Posterior cingulate gyrus (tissue), 11 donors: ENCODE measurements at regions of chr15 and their contacts with region 1.

Region 1: GRCh38 chr15:57561041-57561711 is 30.5 kb upstream of the MYZAP start:
- DNase-seq: peak in 7 of 10 donors; percentile 33 to 94 (median 68)

Region 2: GRCh38 chr15:57635300-57635909 is 74.2 kb after region 1 on chr15:
- intact Hi-C with region 1: loop called (anchors 5 kb)
- DNase-seq: no peak

Region 3: GRCh38 chr15:57654153-57654852 is 93.1 kb after region 1 on chr15:
- intact Hi-C with region 1: no loop called
- DNase-seq: no peak